ENCODE measurements at regions of chr4 and their contacts with region 1.

Region 1: GRCh38 chr4:153344131-153345010 is at the start of gene MND1:
- DNase-seq: peak; percentile 94
- H3K4me3 Mint-ChIP-seq: peak within 1 kb of the TSS; percentile 93
- H3K27ac Mint-ChIP-seq: peak within 1 kb of the TSS; percentile 92
- H3K4me1 Mint-ChIP-seq: peaks cover 33% of the 10 kb centered on the region
- H3K27me3 Mint-ChIP-seq: peaks cover 2% of the 10 kb centered on the region
- total RNA-seq, gene MND1: 51.3 to 52.6 TPM

Region 2: GRCh38 chr4:153095448-153096204 is 248.7 kb before region 1 on chr4:
- CTCF ChIA-PET with region 1: no interaction called
- intact Hi-C with region 1: no loop called
- DNase-seq: no peak
- H3K4me3 Mint-ChIP-seq: no peak overlapping the region
- H3K27ac Mint-ChIP-seq: no peak overlapping the region
- H3K4me1 Mint-ChIP-seq: peaks cover 4% of the 10 kb centered on the region
- H3K27me3 Mint-ChIP-seq: no peaks in the 10 kb centered on the region

Region 3: DNA sequence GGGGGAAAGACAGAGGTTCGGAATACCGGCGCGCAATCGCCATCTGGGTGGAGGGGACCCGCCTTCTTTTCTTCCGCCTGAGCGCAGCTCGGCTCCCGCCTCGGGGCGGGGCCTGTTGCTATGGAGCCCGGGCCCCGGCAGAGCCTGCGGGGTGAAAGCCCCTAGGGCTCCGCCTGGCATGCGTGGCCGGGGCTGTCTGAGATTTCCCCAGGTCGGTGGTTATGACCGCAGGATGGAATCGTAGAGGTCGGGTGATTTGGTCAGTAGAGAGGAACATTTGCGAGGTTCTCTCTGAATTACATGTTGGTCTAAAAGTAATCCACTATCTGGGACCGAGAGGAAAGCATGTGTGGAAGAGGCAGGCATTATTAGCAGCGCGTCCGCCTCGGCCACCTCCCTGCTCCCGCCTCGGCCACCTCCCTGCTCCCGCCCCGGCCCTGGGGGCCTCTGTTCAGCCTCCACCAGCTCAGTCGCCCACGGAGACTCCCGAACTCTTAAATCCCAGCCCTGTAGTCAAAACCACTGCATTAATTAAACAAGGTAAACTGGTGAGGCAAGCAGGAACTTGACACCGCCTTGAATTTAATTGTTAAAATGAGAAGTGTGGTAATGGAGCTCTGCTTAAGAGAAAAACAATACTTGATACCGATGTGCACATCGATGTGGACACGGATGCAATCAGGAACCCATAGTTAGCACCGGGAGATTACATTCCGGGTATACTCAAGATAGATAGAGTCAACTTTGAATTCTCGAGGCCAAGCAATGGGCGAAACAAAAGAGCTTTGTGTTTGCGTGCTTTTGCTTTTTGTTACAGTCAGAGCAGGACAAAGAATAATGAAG is 95.0 kb before region 1 on chr4:
- CTCF ChIA-PET with region 1: no interaction called
- intact Hi-C with region 1: loop called (anchors 1 kb)
- DNase-seq: peak; percentile 91
- H3K4me3 Mint-ChIP-seq: peak overlapping the region; percentile 83
- H3K27ac Mint-ChIP-seq: peak overlapping the region; percentile 91
- H3K4me1 Mint-ChIP-seq: peaks cover 27% of the 10 kb centered on the region
- H3K27me3 Mint-ChIP-seq: no peaks in the 10 kb centered on the region

Region 4: DNA sequence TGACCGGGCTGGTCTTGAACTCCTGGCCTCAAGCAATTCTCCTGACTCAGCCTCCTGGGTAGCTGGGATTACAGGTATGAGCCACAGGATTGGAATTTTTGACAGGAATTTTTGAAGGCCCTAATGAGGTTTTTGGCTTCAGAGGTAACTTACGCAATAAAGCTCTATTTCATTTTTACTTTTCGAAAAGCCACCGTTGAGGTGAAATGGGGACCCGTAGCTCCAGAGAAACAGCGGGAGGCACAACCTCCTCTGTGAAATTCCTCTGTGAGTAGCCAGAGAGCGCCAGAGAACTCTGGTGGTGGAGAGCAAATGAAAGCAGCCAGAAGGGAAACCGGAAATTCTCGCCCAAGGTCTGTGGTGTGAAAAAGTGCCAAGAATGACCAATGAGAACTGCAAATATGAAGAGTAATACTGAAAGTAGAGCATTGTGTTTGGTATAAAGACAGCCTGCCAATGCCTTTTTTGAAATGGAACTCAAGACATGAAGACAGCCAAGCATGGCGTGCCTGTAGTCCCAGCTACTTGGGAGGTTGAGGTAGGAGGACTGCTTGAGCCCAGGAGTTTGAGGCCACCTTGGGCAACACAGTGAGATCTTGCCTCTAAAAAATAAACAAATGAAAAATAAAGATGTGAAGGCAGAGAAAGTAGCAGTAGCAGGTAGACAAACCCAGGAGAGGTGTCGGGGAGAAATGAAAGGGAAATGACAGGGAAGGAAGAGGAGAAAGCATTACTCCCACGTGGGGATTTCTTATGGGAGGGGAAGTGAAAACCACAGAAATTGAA is 88.8 kb after region 1 on chr4:
- CTCF ChIA-PET with region 1: interaction called, 11 read pairs
- intact Hi-C with region 1: loop called (anchors 1 kb)
- DNase-seq: peak; percentile 89
- H3K4me3 Mint-ChIP-seq: peak overlapping the region; percentile 78
- H3K27ac Mint-ChIP-seq: peak overlapping the region; percentile 91
- H3K4me1 Mint-ChIP-seq: peaks cover 76% of the 10 kb centered on the region
- H3K27me3 Mint-ChIP-seq: no peaks in the 10 kb centered on the region

Region 5: GRCh38 chr4:153488006-153488891 is 143.9 kb after region 1 on chr4:
- CTCF ChIA-PET with region 1: interaction called, 5 read pairs
- intact Hi-C with region 1: loop called (anchors 1 kb)
- DNase-seq: peak; percentile 86
- H3K4me3 Mint-ChIP-seq: peak overlapping the region; percentile 69
- H3K27ac Mint-ChIP-seq: peak overlapping the region; percentile 95
- H3K4me1 Mint-ChIP-seq: peaks cover 81% of the 10 kb centered on the region
- H3K27me3 Mint-ChIP-seq: no peaks in the 10 kb centered on the region

Region 6: DNA sequence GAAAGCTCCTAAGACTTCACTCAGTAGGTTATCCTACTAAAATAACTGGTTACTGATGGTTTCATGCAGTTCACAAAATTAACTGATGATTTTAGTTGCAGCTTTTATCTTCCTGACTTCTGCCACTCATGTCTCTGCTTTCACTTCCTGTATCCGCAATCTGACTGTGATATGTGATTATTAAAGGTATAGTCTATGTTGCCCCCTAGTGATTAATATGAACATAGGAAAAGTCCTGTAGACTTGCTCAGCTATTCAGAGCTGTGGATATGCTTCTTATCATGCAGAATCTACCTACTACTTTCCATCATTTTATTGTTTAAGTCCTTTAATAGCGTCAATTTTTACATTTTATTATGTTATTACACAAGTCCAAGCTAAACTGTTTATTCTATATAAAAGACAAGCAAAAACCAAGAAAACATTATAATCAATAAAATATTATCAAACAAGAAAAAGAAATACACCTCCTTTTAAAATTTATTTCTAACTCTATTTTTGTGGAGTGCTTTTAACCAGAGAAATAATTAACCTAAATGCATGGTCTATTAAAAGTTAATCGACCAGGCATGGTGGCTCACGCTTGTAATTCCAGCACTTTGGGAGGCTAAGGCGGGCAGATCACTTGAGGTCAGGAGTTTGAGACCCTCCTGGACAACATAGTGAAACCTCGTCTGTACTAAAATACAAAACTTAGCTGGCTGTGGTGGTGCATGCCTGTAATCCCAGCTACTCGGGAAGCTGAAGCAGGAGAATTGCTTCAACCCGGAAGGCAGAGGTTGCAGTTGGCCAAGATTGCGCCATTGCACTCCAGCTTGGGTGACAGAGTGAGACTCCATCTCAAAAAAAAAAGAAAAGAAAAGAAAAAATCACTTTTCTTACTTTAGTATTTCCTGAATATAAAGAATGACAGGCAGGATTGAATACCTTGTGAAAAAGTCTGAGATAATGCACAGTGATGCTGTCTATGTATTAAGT is 299.3 kb after region 1 on chr4:
- CTCF ChIA-PET with region 1: interaction called, 65 read pairs
- intact Hi-C with region 1: loop called (anchors 1 kb)
- DNase-seq: no peak
- H3K4me3 Mint-ChIP-seq: no peak overlapping the region
- H3K27ac Mint-ChIP-seq: no peak overlapping the region
- H3K4me1 Mint-ChIP-seq: peaks cover 17% of the 10 kb centered on the region
- H3K27me3 Mint-ChIP-seq: no peaks in the 10 kb centered on the region

Region 7: DNA sequence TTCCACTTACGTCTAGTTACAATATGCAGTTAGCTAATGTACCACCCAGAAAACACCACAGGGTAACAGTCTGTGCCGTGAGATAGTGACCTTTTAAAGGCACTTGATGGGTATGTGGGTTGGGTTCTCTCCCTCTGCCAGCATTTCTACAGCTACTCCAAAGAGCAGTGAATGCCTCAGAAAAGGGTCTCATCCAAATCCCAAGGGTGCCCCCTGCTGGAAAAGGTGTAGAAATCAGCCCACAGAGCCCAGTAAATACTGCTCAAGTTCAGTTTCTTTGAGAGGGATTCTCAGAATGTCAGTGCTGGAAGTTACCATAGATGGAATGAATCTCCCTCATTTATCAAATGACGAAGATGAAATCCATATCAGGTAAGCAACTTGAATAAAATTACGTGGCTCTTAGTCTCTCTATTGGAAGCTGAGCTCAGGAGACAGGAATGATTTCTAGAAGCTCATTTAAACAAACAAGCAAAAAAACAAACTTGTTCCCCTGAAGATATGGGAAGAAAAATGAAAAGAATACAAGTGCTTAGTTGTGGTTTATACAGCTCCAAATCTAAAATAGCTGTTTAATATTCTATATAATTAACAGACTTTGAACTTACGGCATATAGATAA is 405.9 kb after region 1 on chr4:
- CTCF ChIA-PET with region 1: interaction called, 14 read pairs
- intact Hi-C with region 1: loop called (anchors 1 kb)
- DNase-seq: peak; percentile 87
- H3K4me3 Mint-ChIP-seq: no peak overlapping the region
- H3K27ac Mint-ChIP-seq: no peak overlapping the region
- H3K4me1 Mint-ChIP-seq: peaks cover 11% of the 10 kb centered on the region
- H3K27me3 Mint-ChIP-seq: no peaks in the 10 kb centered on the region

Measured in activated naive CD4-positive, alpha-beta T cell treated with anti-CD3 and anti-CD28 coated beads for 36 hours (primary cell).